ENCODE measurements at regions of chr3 and their contacts with region 1.

Region 1: GRCh38 chr3:33131331-33132018 is 17.7 kb downstream of the CRTAP start:
- DNase-seq: peak; percentile 78

Region 2: GRCh38 chr3:33146791-33147445 is 15.4 kb after region 1 on chr3:
- CTCF ChIA-PET with region 1: interaction called, 10 read pairs
- POLR2A ChIA-PET with region 1: no interaction called
- DNase-seq: no peak

Region 3: DNA sequence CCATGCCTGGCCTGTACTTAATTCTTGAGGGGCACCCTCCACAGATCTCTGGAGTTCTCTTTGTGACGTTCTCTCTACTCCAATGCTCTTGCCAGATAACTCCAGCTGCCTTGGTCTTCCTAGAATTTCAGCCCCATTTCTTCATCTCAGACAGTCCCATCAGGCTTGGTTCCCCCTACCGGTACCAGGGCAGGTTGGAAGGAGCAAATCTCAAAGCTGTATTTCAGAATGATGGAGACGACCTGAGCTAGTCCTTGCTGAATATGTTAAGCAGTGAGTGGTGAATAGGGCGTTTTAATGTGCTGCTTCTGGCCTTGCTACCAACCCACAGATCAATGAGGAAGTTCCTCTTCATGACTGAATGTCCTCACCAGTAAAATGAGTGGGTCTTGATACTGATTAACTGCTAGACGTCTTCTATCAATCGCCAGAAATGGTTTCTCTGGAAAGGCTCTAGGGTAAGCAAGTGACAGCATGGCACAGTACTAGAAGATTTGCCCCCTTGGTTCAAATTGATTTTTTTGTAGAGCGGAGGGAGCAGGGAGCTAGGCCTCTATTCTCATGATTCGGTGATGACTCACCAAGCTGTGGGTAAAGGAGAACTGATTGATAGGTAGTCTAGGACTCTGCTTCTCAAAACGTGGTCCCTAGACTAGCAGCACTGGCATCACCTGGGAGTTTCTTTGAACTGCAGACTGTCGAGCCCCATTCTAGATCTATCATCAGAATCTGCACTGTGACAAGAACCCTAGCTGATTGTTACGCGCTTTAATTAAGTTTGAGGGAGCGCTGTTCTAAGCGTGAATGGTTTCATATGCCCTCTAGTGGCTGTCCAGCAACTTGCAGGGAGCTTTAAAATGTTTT is 241.0 kb after region 1 on chr3:
- CTCF ChIA-PET with region 1: interaction called, 62 read pairs
- POLR2A ChIA-PET with region 1: interaction called, 9 read pairs
- DNase-seq: peak; percentile 59